Activated CD4-positive, alpha-beta T cell treated with anti-CD3 and anti-CD28 coated beads for 36 hours (primary cell): ENCODE measurements at regions of chr7 and their contacts with region 1.

Region 1: DNA sequence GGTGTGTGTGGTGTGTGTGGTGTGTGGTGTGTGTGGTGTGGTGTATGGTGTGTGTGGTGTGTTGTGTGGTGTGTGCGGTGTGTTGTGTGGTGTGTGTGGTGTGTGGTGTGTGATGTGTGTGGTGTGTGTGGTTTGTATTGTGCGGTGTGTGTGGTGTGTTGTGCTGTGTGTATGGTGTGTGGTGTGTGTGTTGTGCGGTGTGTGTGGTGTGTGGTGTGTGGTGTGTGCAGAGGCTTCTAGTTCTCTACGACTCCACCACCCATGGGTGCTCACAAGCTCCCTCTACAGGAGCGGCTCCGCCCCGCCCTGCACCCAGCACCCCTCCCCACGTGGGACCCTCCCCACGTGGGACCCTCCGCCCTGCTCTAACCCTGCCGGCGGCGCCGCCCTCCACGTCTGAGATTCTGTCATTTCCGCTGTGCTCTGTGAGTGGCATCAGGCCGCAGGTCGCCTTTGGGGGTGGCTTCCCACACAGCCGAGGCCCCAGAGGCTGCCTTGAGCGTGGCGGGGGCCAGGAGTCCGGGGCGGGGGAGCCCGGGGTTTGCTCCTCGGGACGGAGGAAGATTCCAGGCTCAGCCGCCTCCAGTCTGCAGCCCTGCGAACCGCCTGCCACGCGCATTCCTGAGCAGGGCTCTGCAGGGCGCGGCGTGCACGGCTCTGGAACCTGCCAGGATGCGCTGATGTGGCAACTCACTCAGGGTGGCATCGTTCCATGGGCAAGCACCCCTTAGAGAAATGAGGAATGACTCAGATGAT is 37.0 kb upstream of the DNAJB6 start:
- DNase-seq: peak; percentile 75
- ATAC-seq: peak; percentile 32
- H3K4me3 Mint-ChIP-seq: peak overlapping the region; percentile 12
- H3K27ac Mint-ChIP-seq: peak overlapping the region; percentile 84
- H3K4me1 Mint-ChIP-seq: peaks cover 35% of the 10 kb centered on the region
- H3K27me3 Mint-ChIP-seq: no peaks in the 10 kb centered on the region

Region 2: DNA sequence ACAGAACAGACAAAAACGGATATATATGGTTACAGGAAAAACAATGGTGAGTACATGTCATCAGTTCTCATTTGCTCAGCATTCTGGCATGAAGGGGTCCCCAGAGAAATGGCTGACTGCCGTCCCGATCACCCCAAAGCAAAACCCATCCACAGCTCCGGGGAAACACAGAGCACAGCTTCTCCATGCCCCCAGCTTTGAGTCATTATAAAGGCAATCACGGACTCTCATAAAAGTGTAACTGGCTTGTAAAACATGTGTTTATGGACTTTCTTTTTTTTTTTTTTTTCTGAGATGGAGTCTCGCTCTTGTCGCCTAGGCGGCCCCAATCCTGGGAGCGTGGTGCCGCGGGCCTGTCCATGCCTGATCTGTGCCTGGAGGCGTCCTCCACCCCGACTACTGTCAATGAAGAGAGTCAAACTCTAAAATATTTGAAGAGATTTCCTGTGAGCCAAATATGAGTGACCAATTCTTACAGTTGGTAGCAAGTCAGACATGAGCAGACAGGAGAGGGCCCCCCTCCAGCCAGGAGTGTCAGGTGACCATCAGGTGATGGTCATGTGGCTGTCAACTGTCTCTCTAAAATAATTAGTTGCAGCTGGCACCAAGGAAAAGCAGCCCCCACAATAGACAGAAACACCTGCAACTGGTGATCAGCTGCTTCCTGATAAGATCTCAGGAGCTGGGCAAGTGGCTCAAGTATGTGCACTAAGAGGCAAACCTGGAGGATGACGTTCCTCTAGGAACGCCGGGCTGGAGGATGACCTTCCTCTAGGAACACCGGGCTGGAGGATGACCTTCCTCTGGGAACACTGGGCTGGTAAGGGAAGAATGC is 372.0 kb before region 1 on chr7:
- CTCF ChIA-PET with region 1: no interaction called
- POLR2A ChIA-PET with region 1: no interaction called
- intact Hi-C with region 1: loop called in 1 of 2 experiments (anchors 1 kb)
- DNase-seq: no peak
- ATAC-seq: no peak
- H3K4me3 Mint-ChIP-seq: no peak overlapping the region
- H3K27ac Mint-ChIP-seq: no peak overlapping the region
- H3K4me1 Mint-ChIP-seq: peaks cover 34% of the 10 kb centered on the region
- H3K27me3 Mint-ChIP-seq: peaks cover 5% of the 10 kb centered on the region

Region 3: DNA sequence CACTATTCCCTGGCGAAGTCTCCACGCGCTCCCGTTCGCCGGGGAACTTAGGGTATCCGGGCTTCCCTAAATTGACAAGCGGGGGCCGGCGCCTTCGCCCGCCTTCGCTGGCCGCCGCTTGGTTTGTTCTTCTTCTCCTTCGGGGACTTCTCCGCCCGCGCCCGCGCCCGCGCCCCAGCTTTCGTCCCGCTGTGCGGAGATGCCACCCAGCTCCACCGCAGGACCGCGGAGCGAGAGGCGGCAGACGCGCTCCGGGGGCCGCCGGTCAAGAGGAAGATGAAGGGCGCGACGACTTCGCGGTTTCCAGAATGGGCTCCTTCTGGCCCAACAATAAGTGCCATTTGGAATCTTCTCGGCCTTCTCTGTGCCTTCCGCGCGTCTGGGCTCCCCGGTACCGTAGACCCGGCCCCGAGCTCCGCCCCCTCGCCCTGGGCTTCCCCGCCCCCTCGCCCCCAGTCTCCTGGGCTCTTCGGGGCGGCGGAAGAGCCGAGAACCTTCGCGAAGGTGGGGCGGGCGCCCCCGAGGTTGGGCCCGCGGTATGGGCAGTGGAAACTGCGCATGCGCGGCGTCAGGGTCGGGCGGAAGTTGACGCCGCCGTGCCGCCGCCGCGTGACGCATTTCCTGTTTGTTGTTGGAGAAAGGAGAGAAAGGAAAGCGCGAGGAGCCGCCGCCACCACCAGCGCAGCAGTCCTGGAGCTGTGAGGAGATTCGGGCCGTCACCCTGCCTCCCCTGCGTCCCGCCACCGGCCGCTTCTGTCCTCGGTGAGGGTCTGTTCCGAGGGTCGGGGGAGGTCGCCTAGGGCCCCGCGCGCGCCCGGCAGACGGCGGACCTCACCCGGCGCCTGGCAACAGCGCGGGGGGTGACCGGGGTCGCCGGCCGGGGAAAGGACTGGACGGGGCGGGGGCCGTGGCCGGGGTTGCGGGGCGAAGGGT is 36.9 kb after region 1 on chr7 and contains the start of gene DNAJB6:
- CTCF ChIA-PET with region 1: interaction called, 6 read pairs
- POLR2A ChIA-PET with region 1: interaction called, 12 read pairs
- intact Hi-C with region 1: loop called (anchors 1 kb)
- DNase-seq: peak; percentile 97
- ATAC-seq: peak; percentile 75
- H3K4me3 Mint-ChIP-seq: peak within 1 kb of the TSS; percentile 90
- H3K27ac Mint-ChIP-seq: peak within 1 kb of the TSS; percentile 96
- H3K4me1 Mint-ChIP-seq: peaks cover 40% of the 10 kb centered on the region
- H3K27me3 Mint-ChIP-seq: no peaks in the 10 kb centered on the region
- total RNA-seq, gene DNAJB6: 89.9 to 92.9 TPM

Region 4: DNA sequence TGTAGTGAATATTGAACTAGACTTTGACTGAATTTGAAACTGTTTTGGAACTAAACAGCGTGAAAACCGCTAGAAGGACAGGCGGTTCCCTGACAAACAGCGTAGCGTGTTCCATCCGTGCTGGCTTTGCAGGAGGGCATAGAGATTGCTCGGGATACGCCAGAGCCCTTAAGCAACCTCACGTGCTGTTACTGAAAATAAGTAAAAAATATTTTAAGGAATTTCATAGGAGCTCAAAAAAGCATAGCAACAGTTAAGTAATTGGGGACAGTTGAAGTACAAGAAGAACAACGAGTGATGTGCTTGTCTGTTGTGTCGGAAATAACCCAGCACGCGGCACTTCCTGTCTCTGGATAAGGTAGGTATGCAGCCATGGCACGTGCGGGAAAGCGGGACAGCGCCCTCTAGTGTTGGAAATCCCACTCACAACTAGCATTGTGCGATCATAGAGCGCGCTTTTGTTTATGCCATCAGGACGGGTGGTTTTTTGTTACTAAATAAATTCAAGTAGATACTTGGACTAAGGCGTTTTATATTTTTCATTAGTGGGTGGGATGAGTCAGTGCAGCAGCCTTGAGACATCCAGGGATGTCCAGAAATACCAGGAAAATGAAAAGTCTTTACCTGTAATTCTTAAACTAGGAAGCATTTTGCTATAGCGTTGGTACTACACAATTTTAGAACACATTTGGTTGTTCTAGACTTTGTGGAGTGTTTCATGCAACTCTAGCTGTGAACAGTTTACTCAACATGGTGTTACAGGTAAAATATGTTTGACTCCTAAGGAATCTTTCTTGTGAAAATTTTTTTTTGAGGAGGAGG is 87.4 kb after region 1 on chr7:
- CTCF ChIA-PET with region 1: no interaction called
- POLR2A ChIA-PET with region 1: no interaction called
- intact Hi-C with region 1: loop called in 1 of 2 experiments (anchors 1 kb)
- DNase-seq: peak; percentile 95
- ATAC-seq: peak; percentile 96
- H3K4me3 Mint-ChIP-seq: no peak overlapping the region
- H3K27ac Mint-ChIP-seq: peak overlapping the region; percentile 75
- H3K4me1 Mint-ChIP-seq: peaks cover 36% of the 10 kb centered on the region
- H3K27me3 Mint-ChIP-seq: no peaks in the 10 kb centered on the region

Region 5: GRCh38 chr7:157412021-157412443 is 112.2 kb after region 1 on chr7:
- CTCF ChIA-PET with region 1: no interaction called
- POLR2A ChIA-PET with region 1: no interaction called
- intact Hi-C with region 1: loop called in 1 of 2 experiments (anchors 1 kb)
- DNase-seq: peak; percentile 82
- ATAC-seq: peak; percentile 96
- H3K4me3 Mint-ChIP-seq: peak overlapping the region; percentile 43
- H3K27ac Mint-ChIP-seq: peak overlapping the region; percentile 90
- H3K4me1 Mint-ChIP-seq: peaks cover 16% of the 10 kb centered on the region
- H3K27me3 Mint-ChIP-seq: no peaks in the 10 kb centered on the region

Region 6: DNA sequence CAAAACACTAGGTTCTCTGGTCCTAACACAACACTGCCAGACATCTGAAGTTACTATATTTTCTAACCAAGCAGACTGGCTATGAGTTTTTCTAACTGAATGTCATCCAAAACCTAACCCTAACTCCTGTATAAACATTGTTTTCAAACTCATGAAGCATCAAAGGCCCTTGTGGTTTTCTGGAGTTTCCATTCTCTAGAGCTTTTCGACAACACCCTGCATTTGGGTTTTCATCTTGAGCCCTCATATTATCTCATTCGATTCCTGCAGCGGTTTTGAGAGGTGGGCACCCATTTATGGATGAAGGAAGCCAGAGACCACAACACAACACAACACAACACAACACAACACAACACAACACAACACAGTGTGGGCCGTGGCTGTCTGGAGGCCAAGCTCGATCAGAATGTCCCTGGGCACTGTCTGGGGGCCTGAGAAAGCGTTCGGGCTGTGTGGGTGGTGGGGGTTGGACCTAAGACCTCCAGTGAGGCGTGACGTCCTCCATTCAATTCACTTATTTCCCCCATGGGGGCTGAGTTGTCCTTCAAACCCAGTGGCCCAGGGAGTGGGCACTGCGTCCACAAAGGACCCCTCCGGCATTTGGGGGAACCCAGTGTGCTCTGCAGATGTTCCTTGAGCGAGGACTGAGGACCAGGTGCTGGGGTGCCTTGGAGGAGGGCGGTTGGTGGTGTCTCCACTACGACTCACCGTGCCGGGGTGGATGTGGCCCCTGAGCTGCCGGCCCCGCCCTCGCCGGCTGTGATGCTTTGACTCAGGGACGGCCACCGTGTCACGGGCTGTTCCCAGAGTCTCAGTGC is 527.5 kb after region 1 on chr7:
- CTCF ChIA-PET with region 1: no interaction called
- POLR2A ChIA-PET with region 1: no interaction called
- intact Hi-C with region 1: loop called in 1 of 2 experiments (anchors 10 kb)
- DNase-seq: peak; percentile 68
- ATAC-seq: peak; percentile 55
- H3K4me3 Mint-ChIP-seq: no peak overlapping the region
- H3K27ac Mint-ChIP-seq: peak overlapping the region; percentile 23
- H3K4me1 Mint-ChIP-seq: peaks cover 36% of the 10 kb centered on the region
- H3K27me3 Mint-ChIP-seq: no peaks in the 10 kb centered on the region